ENCODE measurements at regions of chr7 and their contacts with region 1.

Region 1: DNA sequence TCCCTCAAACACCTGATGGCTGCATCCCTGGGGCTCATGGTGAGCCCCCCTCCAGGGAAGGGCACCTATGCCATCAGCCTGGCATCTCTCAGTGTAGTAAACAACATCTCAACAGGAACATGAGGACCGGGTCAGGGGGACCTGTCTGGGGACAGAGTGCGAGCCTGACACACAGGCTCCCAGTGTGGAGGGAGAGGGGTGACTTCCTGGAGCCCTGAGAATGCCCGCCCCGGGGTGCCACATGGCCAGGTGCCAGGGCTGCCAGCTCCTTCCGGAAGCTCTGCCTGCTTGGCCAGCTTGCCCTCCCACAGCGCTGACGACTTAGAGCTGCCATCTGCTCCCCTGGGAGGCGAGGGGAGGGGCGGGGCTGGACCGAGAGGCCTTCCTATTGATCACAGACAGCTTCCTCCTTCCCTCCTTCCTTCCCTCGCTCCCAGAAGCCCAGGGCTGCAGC is 12.3 kb downstream of the STX1A start:
- DNase-seq: peak; percentile 87 to 98
- ATAC-seq: peak; percentile 19 to 48
- H3K4me3 ChIP-seq: peak overlapping the region; percentile 30; the same call in 2 of the 3 replicates
- H3K27ac ChIP-seq: peak overlapping the region; percentile 99 to 100
- H3K4me1 ChIP-seq: peaks cover 93% of the 10 kb centered on the region
- CTCF ChIP-seq: no peak
- EP300 ChIP-seq: peak; percentile 88 to 91; a peak in 4 of 5 replicates
- POLR2A ChIP-seq: no peak
- RAD21 ChIP-seq: no peak; a peak in 2 of 5 replicates

Region 2: GRCh38 chr7:73683056-73683964 is 23.9 kb before region 1 on chr7 and contains the starts of genes BUD23 and DNAJC30:
- CTCF ChIA-PET with region 1: interaction called, 19 read pairs
- POLR2A ChIA-PET with region 1: interaction called, 13 read pairs
- DNase-seq: peak; percentile 93 to 98
- ATAC-seq: peak; percentile 96
- H3K4me3 ChIP-seq: peak within 1 kb of the TSS; percentile 77
- H3K27ac ChIP-seq: peak within 1 kb of the TSS; percentile 92 to 93
- H3K4me1 ChIP-seq: peaks cover 33% of the 10 kb centered on the region
- CTCF ChIP-seq: no peak
- EP300 ChIP-seq: no peak
- POLR2A ChIP-seq: peak; percentile 77
- RAD21 ChIP-seq: no peak; a peak in 1 of 5 replicates
- polyA plus RNA-seq, gene BUD23: 131 and 161 TPM in 2 replicates
- polyA plus RNA-seq, gene DNAJC30: 5.2 and 5.7 TPM in 2 replicates

Region 3: GRCh38 chr7:73718905-73719805 is 12.0 kb after region 1 on chr7 and contains the start of gene STX1A:
- CTCF ChIA-PET with region 1: interaction called, 139 read pairs
- POLR2A ChIA-PET with region 1: interaction called, 135 read pairs
- DNase-seq: peak in 1 of 2 experiments; percentile 66
- ATAC-seq: peak; percentile 17 to 32; a peak in 5 of 6 replicates
- H3K4me3 ChIP-seq: peak within 1 kb of the TSS; percentile 100
- H3K27ac ChIP-seq: peak within 1 kb of the TSS; percentile 99 to 100
- H3K4me1 ChIP-seq: peaks cover 65% of the 10 kb centered on the region
- CTCF ChIP-seq: no peak
- EP300 ChIP-seq: no peak
- POLR2A ChIP-seq: peak; percentile 63
- RAD21 ChIP-seq: no peak
- polyA plus RNA-seq, gene STX1A: 72.9 and 81.7 TPM in 2 replicates

Region 4: GRCh38 chr7:73822319-73823076 is 115.3 kb after region 1 on chr7:
- CTCF ChIA-PET with region 1: no interaction called
- POLR2A ChIA-PET with region 1: no interaction called
- DNase-seq: peak; percentile 91 to 98
- ATAC-seq: peak; percentile 96 to 97
- H3K4me3 ChIP-seq: 0 out of 3 replicates have a peak overlapping the region, but pooled peaks have one; percentile 3
- H3K27ac ChIP-seq: peak overlapping the region; percentile 82 to 88
- H3K4me1 ChIP-seq: peaks cover 32% of the 10 kb centered on the region
- CTCF ChIP-seq: no peak
- EP300 ChIP-seq: no peak
- POLR2A ChIP-seq: no peak
- RAD21 ChIP-seq: no peak; a peak in 1 of 5 replicates